HCT116 (cell line): ENCODE measurements at regions of chr3 and their contacts with region 1.

Region 1: DNA sequence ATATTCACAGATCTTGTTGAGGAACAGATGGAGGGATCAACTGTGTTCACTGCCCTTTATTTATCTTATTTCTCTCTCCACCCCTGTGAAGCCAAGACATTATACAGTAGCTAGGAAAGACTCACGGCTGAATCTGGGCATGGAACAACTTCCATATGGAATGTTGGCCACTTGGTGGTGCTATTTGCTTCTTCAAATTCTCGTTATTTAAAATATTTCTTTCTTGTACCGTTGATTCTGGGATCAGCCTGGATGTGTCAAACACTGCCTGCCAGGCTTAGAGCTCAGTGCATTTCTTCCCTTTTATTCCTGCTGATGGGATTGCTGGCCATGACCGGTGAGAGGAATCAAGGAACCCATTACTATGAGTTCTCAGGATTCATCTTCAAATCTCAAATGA is 17.5 kb upstream of the GASK1A start:
- DNase-seq: peak; percentile 41
- ATAC-seq: peak; percentile 81
- H3K4me3 ChIP-seq: no peak overlapping the region
- H3K27ac ChIP-seq: no peak overlapping the region
- H3K4me1 ChIP-seq: no peaks in the 10 kb centered on the region
- H3K27me3 ChIP-seq: peaks cover 14% of the 10 kb centered on the region; the same call in 1 of the 2 replicates
- CTCF ChIP-seq: peak; percentile 62 to 74 (median 69); a peak in 5 of 6 replicates
- POLR2A ChIP-seq: no peak
- RAD21 ChIP-seq: peak; percentile 84

Region 2: DNA sequence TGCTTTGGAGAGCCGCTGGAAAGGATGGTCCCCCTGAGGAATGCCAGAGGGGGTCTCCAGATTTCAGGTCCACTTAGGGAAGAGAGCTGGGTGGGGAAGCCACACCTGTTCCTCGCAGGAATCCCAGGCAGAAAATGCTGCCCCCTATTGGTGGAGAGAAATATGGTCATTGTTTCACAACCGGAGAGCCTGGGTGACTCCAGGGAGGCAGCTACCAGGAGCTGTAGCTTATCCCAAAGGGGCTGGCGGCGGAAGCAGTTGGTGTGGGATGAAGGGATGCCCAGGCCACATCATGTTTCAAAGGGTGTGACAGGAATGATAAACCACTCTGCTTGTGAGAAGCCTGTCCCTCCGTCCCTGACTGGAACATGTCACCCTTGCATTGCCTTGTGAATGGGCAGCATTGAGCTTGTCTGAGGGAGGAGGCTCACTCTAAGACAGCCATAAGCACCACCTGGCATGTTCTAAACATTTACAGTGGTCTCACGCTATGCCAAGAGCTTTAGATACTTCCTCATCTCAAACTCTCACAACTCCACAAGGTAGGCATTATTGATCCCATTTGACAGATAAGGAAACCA is 109.8 kb after region 1 on chr3:
- CTCF ChIA-PET with region 1: interaction called, 36 read pairs
- POLR2A ChIA-PET with region 1: no interaction called
- RAD21 ChIA-PET with region 1: interaction called in 1 of 2 experiments, 5 read pairs
- intact Hi-C with region 1: loop called (anchors 5 kb)
- DNase-seq: peak; percentile 19
- ATAC-seq: peak; percentile 91
- H3K4me3 ChIP-seq: no peak overlapping the region
- H3K27ac ChIP-seq: no peak overlapping the region
- H3K4me1 ChIP-seq: peaks cover 0 to 2% of the 10 kb centered on the region in 2 experiments; a peak in 3 of 4 replicates
- H3K27me3 ChIP-seq: no peaks in the 10 kb centered on the region
- CTCF ChIP-seq: peak; percentile 50 to 91 (median 79); a peak in 5 of 6 replicates
- POLR2A ChIP-seq: no peak
- RAD21 ChIP-seq: peak; percentile 60

Region 3: GRCh38 chr3:43155464-43156121 is 194.0 kb after region 1 on chr3:
- CTCF ChIA-PET with region 1: interaction called, 30 read pairs
- POLR2A ChIA-PET with region 1: interaction called, 3 read pairs
- RAD21 ChIA-PET with region 1: interaction called in 1 of 2 experiments, 4 read pairs
- intact Hi-C with region 1: loop called (anchors 1 kb)
- DNase-seq: peak; percentile 73
- ATAC-seq: peak; percentile 98
- H3K4me3 ChIP-seq: no peak overlapping the region
- H3K27ac ChIP-seq: no peak overlapping the region
- H3K4me1 ChIP-seq: peaks cover 0 to 8% of the 10 kb centered on the region in 2 experiments; a peak in 2 of 4 replicates
- H3K27me3 ChIP-seq: no peaks in the 10 kb centered on the region
- CTCF ChIP-seq: peak; percentile 70 to 73 (median 73)
- POLR2A ChIP-seq: no peak
- RAD21 ChIP-seq: peak; percentile 79

Region 4: DNA sequence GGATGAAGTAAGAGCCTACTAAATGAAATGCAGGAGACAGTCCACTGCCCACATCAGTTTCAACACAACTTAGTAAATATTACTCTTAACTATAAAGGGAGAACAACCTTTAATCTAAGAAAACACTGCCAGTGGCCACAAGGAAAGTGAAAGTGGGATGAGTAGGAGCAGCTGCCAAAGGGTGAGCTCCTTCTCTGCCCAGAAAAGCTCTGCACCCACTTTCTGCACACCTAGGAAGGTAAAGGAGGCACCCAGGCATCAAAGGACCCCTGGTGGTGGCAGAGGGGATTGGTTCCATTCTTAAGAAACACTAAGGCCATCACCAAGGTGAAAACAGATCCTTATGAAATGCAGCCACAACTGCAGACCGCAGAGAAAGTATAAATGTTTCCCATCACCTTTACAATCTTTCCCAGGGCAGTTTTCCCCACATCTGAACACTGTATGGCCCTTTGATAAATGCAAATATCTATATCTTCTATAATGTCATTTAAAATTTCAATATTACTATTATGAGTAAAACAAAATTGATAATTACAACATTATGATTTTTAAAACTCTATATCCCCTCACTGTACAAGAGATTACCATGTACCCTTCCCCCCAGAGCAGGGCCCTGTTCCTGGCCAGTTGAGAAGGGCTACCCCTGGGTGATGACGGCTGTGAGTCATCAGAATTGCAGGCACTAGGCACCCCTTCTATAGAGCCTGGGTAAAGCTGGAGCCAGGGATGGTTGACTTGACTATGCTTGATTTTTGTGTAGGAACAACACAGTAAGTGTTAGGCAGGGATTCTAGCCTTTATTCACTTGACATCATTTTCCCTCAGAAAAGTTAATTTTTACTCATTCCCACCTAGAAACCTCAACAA is 416.7 kb after region 1 on chr3:
- CTCF ChIA-PET with region 1: interaction called, 9 read pairs
- POLR2A ChIA-PET with region 1: no interaction called
- RAD21 ChIA-PET with region 1: no interaction called
- intact Hi-C with region 1: loop called (anchors 2 kb)
- DNase-seq: peak; percentile 39
- ATAC-seq: peak; percentile 95
- H3K4me3 ChIP-seq: no peak overlapping the region
- H3K27ac ChIP-seq: no peak overlapping the region
- H3K4me1 ChIP-seq: no peaks in the 10 kb centered on the region
- H3K27me3 ChIP-seq: no peaks in the 10 kb centered on the region
- CTCF ChIP-seq: peak; percentile 57 to 81 (median 72); a peak in 5 of 6 replicates
- POLR2A ChIP-seq: no peak
- RAD21 ChIP-seq: peak; percentile 74

Region 5: DNA sequence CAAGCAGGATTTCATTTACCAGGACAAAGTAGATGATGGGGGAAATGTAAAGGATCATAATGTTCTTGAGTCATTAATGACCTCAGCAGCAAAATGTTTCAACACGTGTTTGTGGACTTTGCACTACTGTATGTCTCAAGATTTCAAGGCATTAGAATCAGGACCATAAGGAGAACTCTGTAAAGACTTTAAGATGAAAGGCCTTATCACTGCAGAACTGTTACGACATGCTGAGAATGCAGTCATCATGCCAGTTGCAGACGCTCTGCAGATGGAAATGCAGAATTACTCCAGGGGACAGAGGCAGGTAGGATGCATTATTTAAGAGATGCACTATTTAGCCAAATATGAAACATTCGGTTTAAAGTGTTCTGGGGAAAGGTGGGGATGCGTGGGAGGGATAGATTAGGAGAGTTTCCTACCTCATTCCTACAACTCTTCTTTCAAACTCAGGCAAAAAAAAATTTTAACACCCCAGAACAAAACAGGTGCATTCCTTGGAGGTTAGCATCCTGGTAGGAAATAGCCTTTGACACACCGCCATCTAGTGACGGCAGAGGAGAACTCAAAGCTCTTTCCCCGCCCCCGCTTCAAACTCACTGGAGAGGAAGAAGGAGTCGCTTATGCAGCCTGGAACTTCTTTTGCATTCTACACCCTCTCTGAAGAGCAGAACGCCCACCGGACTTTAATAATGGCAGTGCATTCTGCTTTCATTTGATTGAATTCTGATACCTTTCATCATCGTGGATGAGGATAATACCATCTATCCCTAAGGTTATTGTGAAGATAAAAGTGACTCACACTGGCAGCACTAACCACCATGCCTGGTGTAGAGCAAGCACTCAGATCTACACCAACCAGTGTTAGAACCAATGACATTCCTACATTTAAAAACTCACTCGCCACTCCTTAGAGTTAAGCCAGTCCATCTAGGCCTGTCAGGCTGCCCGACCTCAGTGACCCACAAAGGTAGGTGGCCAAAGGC is 1236.9 kb after region 1 on chr3:
- CTCF ChIA-PET with region 1: interaction called, 4 read pairs
- POLR2A ChIA-PET with region 1: no interaction called
- RAD21 ChIA-PET with region 1: no interaction called
- intact Hi-C with region 1: loop called (anchors 10 kb)
- DNase-seq: peak; percentile 56
- ATAC-seq: peak; percentile 94
- H3K4me3 ChIP-seq: no peak overlapping the region
- H3K27ac ChIP-seq: no peak overlapping the region
- H3K4me1 ChIP-seq: peaks cover 0 to 4% of the 10 kb centered on the region in 2 experiments; a peak in 1 of 4 replicates
- H3K27me3 ChIP-seq: 0 out of 2 replicates have a peak, but pooled peaks cover 3% of the 10 kb centered on the region
- CTCF ChIP-seq: peak; percentile 79 to 80 (median 79)
- POLR2A ChIP-seq: no peak
- RAD21 ChIP-seq: peak; percentile 94